ENCODE measurements at regions of chr11 and their contacts with region 1.

Region 1: DNA sequence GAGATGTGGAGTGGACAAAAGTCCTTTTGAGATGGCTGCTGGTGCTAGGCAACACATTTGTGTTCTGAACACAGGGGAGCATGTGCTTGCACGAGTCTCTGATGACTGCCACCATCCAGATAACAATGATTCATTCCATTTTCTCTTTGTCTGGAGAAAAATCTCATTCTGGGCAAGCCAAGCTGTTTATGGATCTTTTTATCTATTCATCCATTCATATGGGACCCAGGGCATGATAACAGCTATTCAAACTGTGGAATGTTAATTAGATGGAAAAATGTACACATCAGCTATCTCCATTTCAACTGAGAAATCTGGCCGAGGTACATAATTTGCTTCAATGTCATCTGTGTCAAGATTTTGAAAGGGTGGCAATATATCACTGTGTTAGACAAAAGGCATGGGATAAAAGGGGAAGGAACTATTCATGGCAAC is 117.5 kb upstream of the ZBED5 start:
- DNase-seq: peak in 2 of 10 donors; percentile 46 to 61
- H3K4me3 ChIP-seq: no peak overlapping the region
- H3K27ac ChIP-seq: peak overlapping the region in 44 of 59 donors; percentile 9 to 75 (median 52)
- H3K27me3 ChIP-seq: no peaks in the 10 kb centered on the region
- CTCF ChIP-seq: no peak

Region 2: GRCh38 chr11:10920205-10920604 is 55.1 kb before region 1 on chr11:
- intact Hi-C with region 1: no loop called
- DNase-seq: no peak
- H3K4me3 ChIP-seq: no peak overlapping the region
- H3K27ac ChIP-seq: no peak overlapping the region
- H3K27me3 ChIP-seq: no peaks in the 10 kb centered on the region
- CTCF ChIP-seq: no peak

Region 3: GRCh38 chr11:10943968-10944367 is 31.3 kb before region 1 on chr11:
- intact Hi-C with region 1: loop called in 1 of 2 experiments (anchors 5 kb)
- DNase-seq: no peak
- H3K4me3 ChIP-seq: no peak overlapping the region
- H3K27ac ChIP-seq: no peak overlapping the region
- H3K27me3 ChIP-seq: no peaks in the 10 kb centered on the region
- CTCF ChIP-seq: no peak

Region 4: GRCh38 chr11:11016068-11016467 is 40.8 kb after region 1 on chr11:
- intact Hi-C with region 1: loop called in 1 of 2 experiments (anchors 5 kb)
- DNase-seq: no peak
- H3K4me3 ChIP-seq: no peak overlapping the region
- H3K27ac ChIP-seq: no peak overlapping the region
- H3K27me3 ChIP-seq: peaks cover 0 to 4% (median 0%) of the 10 kb centered on the region in 45 donors
- CTCF ChIP-seq: no peak

Region 5: DNA sequence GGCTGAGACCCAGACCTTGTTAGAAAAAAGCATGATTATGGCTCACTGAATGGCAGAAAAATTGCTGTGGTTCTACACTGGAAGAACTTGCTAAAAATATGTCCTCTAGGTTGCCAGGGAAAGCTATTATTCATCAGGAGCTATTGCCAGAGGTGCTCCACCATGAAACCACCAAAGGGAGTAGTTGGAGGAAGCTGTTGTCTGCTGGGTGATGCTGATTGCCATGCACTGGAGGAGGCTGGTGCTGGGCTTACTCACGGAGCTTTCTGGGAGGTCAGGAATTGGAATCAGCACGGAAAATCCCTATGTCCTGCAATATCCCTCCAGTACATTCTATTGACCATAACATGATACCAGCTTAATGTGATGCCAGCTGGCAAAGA is 82.2 kb after region 1 on chr11:
- intact Hi-C with region 1: no loop called
- DNase-seq: no peak
- H3K4me3 ChIP-seq: no peak overlapping the region
- H3K27ac ChIP-seq: no peak overlapping the region
- H3K27me3 ChIP-seq: no peaks in the 10 kb centered on the region
- CTCF ChIP-seq: no peak

Region 6: GRCh38 chr11:11608783-11609232 is 633.5 kb after region 1 on chr11:
- intact Hi-C with region 1: no loop called
- DNase-seq: no peak
- H3K4me3 ChIP-seq: no peak overlapping the region
- H3K27ac ChIP-seq: no peak overlapping the region
- H3K27me3 ChIP-seq: no peaks in the 10 kb centered on the region
- CTCF ChIP-seq: no peak

Measured in dorsolateral prefrontal cortex (tissue), 120 donors.